ENCODE measurements at regions of chr7 and their contacts with region 1.

Region 1: GRCh38 chr7:106736508-106737201 is 75.7 kb upstream of the CCDC71L start:
- DNase-seq: peak; percentile 55
- H3K4me3 Mint-ChIP-seq: no peak overlapping the region
- H3K27ac Mint-ChIP-seq: peak overlapping the region; percentile 73
- H3K4me1 Mint-ChIP-seq: peaks cover 47% of the 10 kb centered on the region
- H3K27me3 Mint-ChIP-seq: no peaks in the 10 kb centered on the region

Region 2: DNA sequence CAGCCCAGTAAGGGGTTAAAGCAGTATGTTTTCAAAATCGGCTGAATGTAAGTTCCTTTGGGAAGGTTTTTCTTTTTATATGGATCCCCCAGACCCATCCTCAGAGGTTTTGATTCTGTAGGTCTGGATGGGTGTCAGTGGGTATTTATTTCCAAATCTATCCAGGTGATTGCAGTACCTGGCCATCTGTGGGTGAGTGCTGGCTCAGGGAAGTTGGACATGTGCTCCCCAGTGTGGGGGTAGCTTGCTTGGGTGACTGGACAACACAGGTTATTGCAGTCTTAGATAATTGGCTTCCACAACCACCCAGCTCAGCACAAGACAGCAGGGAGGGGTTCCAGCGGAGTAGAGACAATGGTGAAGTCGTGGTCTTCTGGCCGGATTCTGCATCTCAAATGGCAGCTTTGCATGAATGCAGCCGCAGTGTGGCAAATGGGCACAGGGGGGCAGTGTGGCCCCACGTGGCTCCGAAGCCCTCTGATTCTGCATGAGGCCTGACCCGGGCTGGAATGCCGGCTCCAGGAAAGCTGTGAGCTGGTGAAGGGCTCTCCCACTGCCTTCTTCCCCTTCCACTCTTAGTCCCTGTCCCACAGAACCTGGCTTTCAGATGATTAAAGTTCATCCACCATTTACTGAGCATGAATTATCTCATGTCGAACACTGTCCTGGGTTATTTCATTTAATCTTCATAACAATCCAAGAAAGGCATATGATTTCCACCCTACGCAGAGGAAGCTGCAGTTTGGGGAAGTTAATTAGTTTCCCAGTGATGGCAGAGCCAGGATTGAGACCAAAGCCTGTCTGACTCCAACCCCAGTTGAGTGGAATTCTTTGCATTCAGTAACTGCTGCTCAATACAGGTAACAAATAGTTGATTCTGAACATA is 560.0 kb before region 1 on chr7:
- CTCF ChIA-PET with region 1: interaction called, 39 read pairs
- POLR2A ChIA-PET with region 1: no interaction called
- intact Hi-C with region 1: loop called (anchors 1 kb)
- DNase-seq: peak; percentile 80
- H3K4me3 Mint-ChIP-seq: no peak overlapping the region
- H3K27ac Mint-ChIP-seq: no peak overlapping the region
- H3K4me1 Mint-ChIP-seq: peaks cover 5% of the 10 kb centered on the region
- H3K27me3 Mint-ChIP-seq: peaks cover 13% of the 10 kb centered on the region

Region 3: DNA sequence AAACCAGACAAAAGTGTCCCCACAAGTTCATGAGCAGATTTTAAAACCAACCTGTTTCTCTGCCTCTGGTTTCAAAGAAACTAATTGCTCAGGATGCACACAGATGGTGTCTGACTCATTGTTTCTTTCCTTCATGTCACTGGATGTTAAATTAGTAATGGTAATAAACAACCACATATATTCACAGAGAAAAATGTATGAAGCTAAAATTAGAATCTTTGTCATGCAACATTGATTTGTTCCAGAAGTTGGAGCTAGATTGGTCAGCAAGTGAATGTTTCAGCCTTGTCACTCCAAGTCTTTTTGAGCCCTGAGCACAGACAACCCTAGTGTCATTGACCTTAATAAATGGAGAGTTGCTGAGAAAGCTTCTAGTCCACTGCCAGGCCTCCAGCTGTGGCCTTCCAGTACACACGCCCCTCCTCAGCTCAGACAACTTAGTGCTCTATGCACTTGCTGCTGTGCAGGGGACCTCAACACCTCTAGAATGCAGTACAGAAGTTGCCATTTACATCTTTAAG is 251.6 kb before region 1 on chr7:
- CTCF ChIA-PET with region 1: interaction called, 8 read pairs
- POLR2A ChIA-PET with region 1: no interaction called
- intact Hi-C with region 1: loop called (anchors 5 kb)
- DNase-seq: peak; percentile 22
- H3K4me3 Mint-ChIP-seq: no peak overlapping the region
- H3K27ac Mint-ChIP-seq: peak overlapping the region; percentile 78
- H3K4me1 Mint-ChIP-seq: peaks cover 58% of the 10 kb centered on the region
- H3K27me3 Mint-ChIP-seq: peaks cover 18% of the 10 kb centered on the region

Region 4: DNA sequence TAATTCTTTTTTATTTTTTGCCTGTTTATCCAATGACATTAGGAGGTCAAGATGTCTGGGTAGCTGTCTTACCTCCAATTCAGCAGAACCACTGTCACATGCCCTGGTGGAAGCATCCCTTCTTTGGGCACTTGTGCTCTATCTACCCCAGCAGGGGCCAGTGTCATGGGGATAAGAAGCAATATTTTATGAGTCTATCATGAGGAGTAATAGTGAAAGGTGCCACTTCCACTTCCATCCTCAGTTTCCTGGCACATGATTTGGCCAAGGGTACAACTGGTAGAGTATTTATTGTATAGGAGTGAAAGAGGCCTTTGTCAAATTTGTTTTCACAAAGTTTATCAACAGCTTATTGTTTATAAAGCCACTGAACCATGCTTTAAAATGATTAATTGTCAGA is 188.2 kb before region 1 on chr7:
- CTCF ChIA-PET with region 1: interaction called, 102 read pairs
- POLR2A ChIA-PET with region 1: no interaction called
- intact Hi-C with region 1: no loop called
- DNase-seq: no peak
- H3K4me3 Mint-ChIP-seq: no peak overlapping the region
- H3K27ac Mint-ChIP-seq: no peak overlapping the region
- H3K4me1 Mint-ChIP-seq: peaks cover 9% of the 10 kb centered on the region
- H3K27me3 Mint-ChIP-seq: no peaks in the 10 kb centered on the region

Region 5: GRCh38 chr7:106704000-106704840 is 32.4 kb before region 1 on chr7:
- CTCF ChIA-PET with region 1: interaction called, 7 read pairs
- POLR2A ChIA-PET with region 1: no interaction called
- intact Hi-C with region 1: loop called (anchors 5 kb)
- DNase-seq: peak; percentile 27
- H3K4me3 Mint-ChIP-seq: peak overlapping the region; percentile 28
- H3K27ac Mint-ChIP-seq: peak overlapping the region; percentile 72
- H3K4me1 Mint-ChIP-seq: peaks cover 18% of the 10 kb centered on the region
- H3K27me3 Mint-ChIP-seq: no peaks in the 10 kb centered on the region

Region 6: GRCh38 chr7:106767498-106768323 is 31.1 kb after region 1 on chr7:
- CTCF ChIA-PET with region 1: interaction called, 8 read pairs
- POLR2A ChIA-PET with region 1: no interaction called
- intact Hi-C with region 1: loop called (anchors 2 kb)
- DNase-seq: peak; percentile 18
- H3K4me3 Mint-ChIP-seq: peak overlapping the region; percentile 42
- H3K27ac Mint-ChIP-seq: peak overlapping the region; percentile 65
- H3K4me1 Mint-ChIP-seq: peaks cover 49% of the 10 kb centered on the region
- H3K27me3 Mint-ChIP-seq: no peaks in the 10 kb centered on the region

Region 7: DNA sequence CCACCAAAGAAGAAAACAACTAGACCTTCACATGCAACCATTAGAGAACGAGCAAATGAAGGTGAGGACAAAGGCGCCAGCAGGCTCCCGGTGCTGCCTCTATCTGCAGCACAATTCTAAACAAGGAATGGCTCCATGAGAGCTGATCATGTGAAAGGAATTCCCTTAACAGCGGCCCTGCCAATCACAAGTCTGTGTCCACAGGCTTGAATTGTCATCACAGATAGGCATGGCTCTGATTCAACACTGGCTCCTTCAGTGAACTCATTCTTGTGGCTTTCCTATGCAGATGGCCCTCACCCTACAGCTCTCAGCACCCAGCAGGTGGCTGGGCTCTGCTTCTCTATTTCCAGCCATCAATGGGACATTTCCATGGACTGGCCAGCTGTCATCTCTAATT is 1230.1 kb after region 1 on chr7:
- CTCF ChIA-PET with region 1: no interaction called
- POLR2A ChIA-PET with region 1: no interaction called
- intact Hi-C with region 1: no loop called
- DNase-seq: no peak
- H3K4me3 Mint-ChIP-seq: no peak overlapping the region
- H3K27ac Mint-ChIP-seq: no peak overlapping the region
- H3K4me1 Mint-ChIP-seq: no peaks in the 10 kb centered on the region
- H3K27me3 Mint-ChIP-seq: peaks cover 2% of the 10 kb centered on the region

Measured in activated CD4-positive, alpha-beta memory T cell treated with anti-CD3 and anti-CD28 coated beads for 36 hours (primary cell).